PC-3 (cell line): ENCODE measurements at regions of chr4 and their contacts with region 1.

Region 1: DNA sequence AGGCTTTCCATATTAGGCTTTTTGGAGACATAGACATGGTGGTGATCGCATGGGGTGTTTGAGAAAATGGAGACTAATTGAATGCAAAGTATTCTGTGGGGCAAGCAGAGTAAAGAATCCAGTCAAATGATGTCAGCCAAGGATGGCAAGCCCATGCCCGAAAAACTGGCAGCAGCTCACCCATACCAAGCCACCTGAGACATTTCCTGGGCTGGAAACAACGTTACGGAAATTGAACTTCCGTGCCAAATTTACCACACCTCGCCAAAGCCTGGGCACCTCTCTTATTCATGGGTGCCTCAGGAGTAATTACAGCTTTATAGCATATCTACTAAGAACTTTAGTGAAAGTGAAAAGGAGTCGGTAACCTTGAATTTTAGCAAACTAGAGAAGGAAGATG is 166.4 kb downstream of the CBR4 start:
- DNase-seq: no peak
- ATAC-seq: no peak
- H3K4me3 ChIP-seq: no peak overlapping the region
- H3K27ac ChIP-seq: no peak overlapping the region
- H3K4me1 ChIP-seq: no peaks in the 10 kb centered on the region; the same call in 1 of the 2 replicates
- H3K27me3 ChIP-seq: no peaks in the 10 kb centered on the region
- CTCF ChIP-seq: no peak

Region 2: DNA sequence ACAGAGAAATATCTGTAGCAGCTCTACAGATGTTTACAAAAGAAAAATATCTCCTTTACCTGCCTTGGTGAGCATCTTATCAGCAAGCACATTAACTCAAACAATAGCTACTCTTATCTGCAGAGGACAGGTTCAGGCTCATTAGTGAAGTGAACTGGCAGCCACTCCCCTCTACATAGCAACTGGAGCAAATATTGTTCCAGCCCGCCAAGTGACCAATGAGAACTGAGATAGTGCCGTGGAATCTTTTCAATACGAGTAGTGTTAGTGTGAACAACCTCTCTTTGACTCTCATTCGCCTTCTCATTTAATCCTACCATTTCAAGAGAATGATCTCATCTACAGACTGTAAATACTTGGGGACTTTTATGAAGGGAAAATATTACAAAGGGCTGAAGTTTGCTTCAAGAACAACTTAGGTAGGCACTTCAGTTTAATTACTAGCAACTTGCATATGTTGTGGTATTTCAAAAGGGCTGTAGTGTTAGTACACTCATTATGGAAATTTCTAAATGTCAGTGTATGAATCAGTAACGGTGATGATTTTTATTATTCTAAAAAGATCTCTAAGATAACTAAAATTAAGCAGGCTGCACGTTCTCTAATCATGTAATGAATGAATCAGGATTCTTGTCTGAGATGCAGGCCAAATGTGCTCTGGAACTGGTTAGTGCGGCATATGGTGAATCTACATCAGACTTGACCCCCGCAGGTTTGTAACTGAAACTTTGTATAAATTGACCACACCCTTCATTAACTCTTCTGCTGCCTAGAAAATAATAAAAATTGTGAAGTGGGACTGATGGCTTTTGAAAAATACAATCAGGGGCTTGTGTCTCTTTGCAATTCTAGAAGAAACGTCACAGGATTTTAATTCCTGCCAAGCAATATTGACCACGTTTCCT is 274.3 kb before region 1 on chr4:
- CTCF ChIA-PET with region 1: no interaction called
- POLR2A ChIA-PET with region 1: no interaction called
- intact Hi-C with region 1: no loop called
- DNase-seq: no peak
- ATAC-seq: peak; percentile 24; the same call in 1 of the 2 replicates
- H3K4me3 ChIP-seq: peak overlapping the region; percentile 17
- H3K27ac ChIP-seq: peak overlapping the region; percentile 11; the same call in 1 of the 2 replicates
- H3K4me1 ChIP-seq: peaks cover 30% of the 10 kb centered on the region
- H3K27me3 ChIP-seq: no peaks in the 10 kb centered on the region
- CTCF ChIP-seq: no peak

Region 3: DNA sequence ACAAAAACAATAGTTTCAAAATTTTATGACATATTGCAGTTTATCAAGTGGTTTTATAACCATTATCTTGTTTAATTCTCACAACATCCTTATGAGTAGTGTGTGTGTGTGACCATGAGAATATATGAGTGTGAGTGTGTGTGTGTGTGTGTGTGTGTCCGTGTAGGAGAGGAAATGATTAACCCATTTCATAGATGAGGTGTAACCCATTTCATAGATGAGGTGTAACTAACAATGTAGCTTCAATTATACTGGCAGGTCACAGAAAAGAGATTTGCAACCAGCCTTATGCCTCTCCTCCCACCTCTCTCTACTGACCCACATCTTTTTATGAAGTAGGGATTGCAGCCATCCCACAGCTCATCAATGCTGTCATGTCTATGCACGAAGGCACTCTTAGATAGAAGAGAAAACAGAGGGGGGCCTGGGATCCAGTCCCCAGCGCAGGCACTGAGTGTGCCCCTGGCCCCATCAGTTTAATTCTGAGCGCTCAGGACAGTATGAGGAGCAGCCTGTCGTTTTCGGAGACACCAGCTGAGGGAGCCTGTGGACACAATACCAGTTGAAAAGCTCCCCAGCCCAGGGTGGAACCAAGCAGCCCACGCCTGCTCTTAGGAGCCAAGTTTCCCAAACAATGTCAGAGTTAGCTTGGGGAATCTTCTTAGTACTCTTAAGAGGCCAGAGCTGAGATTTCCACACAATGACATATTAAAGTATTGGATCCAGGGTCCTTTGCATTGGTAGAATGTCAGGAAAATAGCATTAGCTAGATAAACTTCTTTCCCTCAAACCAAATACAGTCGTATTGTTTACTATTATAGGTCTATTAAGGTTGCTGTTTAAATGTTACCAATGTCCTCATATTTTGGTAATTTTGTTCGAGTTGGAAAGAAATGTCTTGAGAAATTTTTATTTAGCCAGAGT is 258.2 kb before region 1 on chr4:
- CTCF ChIA-PET with region 1: no interaction called
- POLR2A ChIA-PET with region 1: no interaction called
- intact Hi-C with region 1: no loop called
- DNase-seq: peak; percentile 82
- ATAC-seq: peak; percentile 39
- H3K4me3 ChIP-seq: no peak overlapping the region
- H3K27ac ChIP-seq: peak overlapping the region; percentile 100
- H3K4me1 ChIP-seq: peaks cover 70% of the 10 kb centered on the region
- H3K27me3 ChIP-seq: no peaks in the 10 kb centered on the region
- CTCF ChIP-seq: peak; percentile 72

Region 4: DNA sequence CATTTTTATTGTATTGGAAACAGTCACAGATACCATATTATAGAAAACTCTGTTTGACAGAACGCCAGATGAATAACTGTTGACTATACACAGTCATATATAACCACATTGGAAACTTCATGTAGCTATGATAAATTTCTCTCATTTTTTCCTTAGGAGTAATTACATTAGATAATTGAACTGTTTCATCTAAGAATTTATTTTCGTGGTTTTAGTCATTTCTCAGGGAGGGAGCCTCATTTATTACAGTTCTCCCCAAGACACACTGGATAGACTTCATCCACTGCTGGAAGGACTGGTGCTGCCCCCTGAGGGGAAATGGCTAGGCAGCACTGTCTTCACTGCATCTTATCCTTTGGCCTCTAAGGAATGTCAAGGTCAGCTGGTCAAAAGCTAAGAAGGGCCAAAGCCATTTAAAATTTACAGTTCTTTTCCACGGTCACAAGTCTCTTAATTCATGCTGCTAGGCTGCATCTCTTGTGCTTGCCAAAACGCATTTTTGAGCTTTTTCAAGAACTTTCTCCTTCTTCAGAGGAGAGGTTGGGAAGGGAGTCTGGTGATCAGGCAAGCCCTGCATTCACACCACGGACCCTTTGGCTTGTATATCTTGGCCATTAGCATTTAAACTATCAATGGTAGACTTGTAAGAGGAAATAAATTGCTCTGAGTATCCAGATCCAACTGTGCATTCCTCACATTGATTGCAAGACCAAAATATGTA is 21.3 kb after region 1 on chr4:
- CTCF ChIA-PET with region 1: no interaction called
- POLR2A ChIA-PET with region 1: no interaction called
- intact Hi-C with region 1: loop called (anchors 1 kb)
- DNase-seq: peak; percentile 35
- ATAC-seq: peak; percentile 38; the same call in 1 of the 2 replicates
- H3K4me3 ChIP-seq: no peak overlapping the region
- H3K27ac ChIP-seq: no peak overlapping the region
- H3K4me1 ChIP-seq: peaks cover 7% of the 10 kb centered on the region; the same call in 1 of the 2 replicates
- H3K27me3 ChIP-seq: no peaks in the 10 kb centered on the region
- CTCF ChIP-seq: peak; percentile 41; the same call in 1 of the 2 replicates

Region 5: DNA sequence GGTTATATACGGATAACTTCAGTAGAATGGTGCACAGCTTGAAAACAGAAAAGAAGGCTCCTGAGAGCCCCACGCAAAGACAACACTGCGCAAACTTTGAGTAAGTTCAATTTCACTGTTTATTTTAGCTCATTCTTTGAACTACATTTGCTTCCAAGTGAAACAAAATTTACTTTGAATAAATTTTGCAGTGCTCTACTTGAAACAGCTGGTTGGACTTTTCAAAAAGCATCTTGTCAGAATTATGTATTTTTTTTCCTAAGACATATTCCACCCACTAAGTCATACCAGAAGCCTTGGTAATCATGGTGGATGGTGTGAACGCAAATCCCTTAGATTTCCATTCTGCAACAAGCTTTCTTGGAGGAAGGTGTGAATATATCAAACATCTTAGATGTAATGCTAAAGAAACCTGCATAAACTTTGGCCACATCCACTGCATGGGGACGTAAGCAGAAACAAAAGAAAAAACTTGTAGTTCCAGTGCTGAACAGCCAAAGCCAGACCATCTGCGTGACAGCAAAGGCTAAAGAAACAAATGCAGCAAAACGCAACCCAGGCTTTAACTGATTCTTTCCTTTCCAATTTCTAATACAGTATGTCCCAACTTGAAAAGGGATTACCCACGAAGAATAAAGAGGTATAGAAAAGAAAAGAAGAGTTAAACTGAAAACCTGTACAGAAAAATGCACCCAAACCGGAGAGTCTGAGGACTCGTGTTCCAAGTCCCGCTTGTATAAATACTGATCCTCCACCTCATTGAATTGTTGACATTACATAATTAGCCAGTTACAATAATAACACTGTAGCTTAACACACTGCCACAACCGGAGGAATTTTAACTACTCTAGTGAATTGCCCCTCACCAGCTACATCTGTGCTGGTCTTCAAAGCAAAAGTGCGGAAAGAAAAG is 336.2 kb after region 1 on chr4:
- CTCF ChIA-PET with region 1: no interaction called
- POLR2A ChIA-PET with region 1: no interaction called
- intact Hi-C with region 1: no loop called
- DNase-seq: no peak
- ATAC-seq: no peak
- H3K4me3 ChIP-seq: no peak overlapping the region
- H3K27ac ChIP-seq: no peak overlapping the region
- H3K4me1 ChIP-seq: 0 out of 2 replicates have a peak, but pooled peaks cover 1% of the 10 kb centered on the region
- H3K27me3 ChIP-seq: no peaks in the 10 kb centered on the region
- CTCF ChIP-seq: no peak